Caco-2 (cell line): ENCODE measurements at regions of chr11 and their contacts with region 1.

Region 1: GRCh38 chr11:121282886-121283502 is 9.6 kb upstream of the SC5D start:
- DNase-seq: peak; percentile 51 to 69
- H3K4me3 ChIP-seq: no peak overlapping the region
- H3K4me3 Mint-ChIP-seq: peak overlapping the region; percentile 13
- H3K27ac Mint-ChIP-seq: peak overlapping the region; percentile 14
- H3K4me1 ChIP-seq: peaks cover 40% of the 10 kb centered on the region
- H3K4me1 Mint-ChIP-seq: peaks cover 40% of the 10 kb centered on the region
- H3K27me3 ChIP-seq: no peaks in the 10 kb centered on the region
- H3K27me3 Mint-ChIP-seq: peaks cover under 1% of the 10 kb centered on the region
- CTCF ChIP-seq: no peak

Region 2: GRCh38 chr11:120956710-120957495 is 326.1 kb before region 1 on chr11:
- CTCF ChIA-PET with region 1: no interaction called
- POLR2A ChIA-PET with region 1: no interaction called
- intact Hi-C with region 1: no loop called
- DNase-seq: no peak
- H3K4me3 ChIP-seq: no peak overlapping the region
- H3K4me3 Mint-ChIP-seq: no peak overlapping the region
- H3K27ac Mint-ChIP-seq: no peak overlapping the region
- H3K4me1 ChIP-seq: peaks cover 5% of the 10 kb centered on the region; the same call in 1 of the 2 replicates
- H3K4me1 Mint-ChIP-seq: peaks cover 7% of the 10 kb centered on the region
- H3K27me3 ChIP-seq: peaks cover 1% of the 10 kb centered on the region; the same call in 1 of the 2 replicates
- H3K27me3 Mint-ChIP-seq: peaks cover 17% of the 10 kb centered on the region
- CTCF ChIP-seq: no peak

Region 3: DNA sequence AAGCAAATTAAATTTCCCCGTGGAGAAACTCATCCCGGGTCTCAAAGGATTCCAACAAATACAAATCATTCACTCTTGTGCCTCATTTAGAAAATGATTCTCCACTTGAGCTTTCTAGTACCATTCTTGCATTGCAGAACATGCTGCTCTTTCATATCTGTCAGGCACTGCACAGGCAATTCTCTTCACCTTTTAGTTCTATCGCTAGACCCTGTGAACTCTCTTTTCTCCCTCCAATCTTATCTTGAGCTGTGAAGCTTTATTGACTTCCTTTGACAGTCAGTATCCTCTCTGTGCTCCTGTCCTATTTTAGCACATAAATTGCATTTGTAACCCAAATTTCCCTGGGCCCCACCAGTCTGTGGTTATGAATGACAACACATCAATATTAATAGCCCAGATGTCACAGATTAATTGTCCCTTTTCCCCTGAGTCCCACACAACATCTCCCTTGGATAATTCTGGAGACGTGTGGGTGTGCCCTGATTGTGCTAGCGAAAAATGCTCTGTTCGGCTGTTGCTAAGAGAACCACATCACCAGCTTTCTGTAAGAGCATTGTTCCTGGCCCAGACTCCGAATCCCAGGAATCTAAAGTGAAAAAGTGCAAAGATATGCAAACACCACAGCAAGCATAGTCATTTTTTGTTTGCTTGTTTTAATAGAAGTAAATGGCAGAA is 12.9 kb before region 1 on chr11:
- CTCF ChIA-PET with region 1: no interaction called
- POLR2A ChIA-PET with region 1: no interaction called
- intact Hi-C with region 1: loop called (anchors 1 kb)
- DNase-seq: no peak
- H3K4me3 ChIP-seq: no peak overlapping the region
- H3K4me3 Mint-ChIP-seq: no peak overlapping the region
- H3K27ac Mint-ChIP-seq: no peak overlapping the region
- H3K4me1 ChIP-seq: peaks cover 22% of the 10 kb centered on the region
- H3K4me1 Mint-ChIP-seq: peaks cover 40% of the 10 kb centered on the region
- H3K27me3 ChIP-seq: no peaks in the 10 kb centered on the region
- H3K27me3 Mint-ChIP-seq: no peaks in the 10 kb centered on the region
- CTCF ChIP-seq: no peak